ENCODE measurements at regions of chr6 and their contacts with region 1.

Region 1: GRCh38 chr6:34154668-34155447 is 9.0 kb upstream of the GRM4 start:
- DNase-seq: peak in 1 of 2 donors; percentile 55
- ATAC-seq: peak; percentile 85

Region 2: DNA sequence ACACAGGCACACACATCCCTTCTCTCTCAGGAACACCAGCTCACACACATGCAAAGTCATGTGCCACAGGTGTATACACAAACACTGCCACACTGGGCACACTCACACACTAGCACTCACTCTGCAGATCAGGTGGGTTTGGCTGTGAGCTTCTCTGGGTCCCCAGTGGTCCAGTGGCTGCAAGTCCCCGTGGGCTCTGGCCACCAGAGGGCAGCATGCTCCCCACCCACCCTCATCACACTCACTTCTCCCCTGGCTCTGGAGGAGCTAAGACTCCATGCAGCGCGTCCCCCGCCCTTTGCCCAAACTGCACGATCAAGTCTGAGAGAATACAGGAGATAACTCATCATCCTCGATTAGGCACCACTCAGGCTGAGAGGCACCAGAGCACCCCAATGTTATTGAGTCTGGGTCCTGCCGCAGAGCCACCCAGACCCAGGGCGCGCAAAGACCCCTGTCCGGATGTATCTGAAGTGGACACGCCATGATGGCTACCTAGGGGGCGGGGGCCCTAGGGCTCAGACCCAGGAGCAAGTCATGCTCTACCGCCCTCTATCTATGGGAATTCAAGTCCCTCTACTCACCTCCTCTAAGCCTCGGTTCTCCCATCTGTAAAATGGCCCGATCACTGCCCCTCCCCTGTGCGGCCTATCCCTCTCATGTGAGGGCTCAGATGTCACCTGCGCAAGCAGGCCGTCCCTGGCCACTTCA is 99.5 kb before region 1 on chr6:
- intact Hi-C with region 1: loop called in 1 of 2 experiments (anchors 10 kb)
- DNase-seq: peak in 1 of 2 donors; percentile 71
- ATAC-seq: peak; percentile 46

Measured in left colon (tissue), 2 donors.